H1 (cell line): ENCODE measurements at regions of chr19 and their contacts with region 1.

Region 1: DNA sequence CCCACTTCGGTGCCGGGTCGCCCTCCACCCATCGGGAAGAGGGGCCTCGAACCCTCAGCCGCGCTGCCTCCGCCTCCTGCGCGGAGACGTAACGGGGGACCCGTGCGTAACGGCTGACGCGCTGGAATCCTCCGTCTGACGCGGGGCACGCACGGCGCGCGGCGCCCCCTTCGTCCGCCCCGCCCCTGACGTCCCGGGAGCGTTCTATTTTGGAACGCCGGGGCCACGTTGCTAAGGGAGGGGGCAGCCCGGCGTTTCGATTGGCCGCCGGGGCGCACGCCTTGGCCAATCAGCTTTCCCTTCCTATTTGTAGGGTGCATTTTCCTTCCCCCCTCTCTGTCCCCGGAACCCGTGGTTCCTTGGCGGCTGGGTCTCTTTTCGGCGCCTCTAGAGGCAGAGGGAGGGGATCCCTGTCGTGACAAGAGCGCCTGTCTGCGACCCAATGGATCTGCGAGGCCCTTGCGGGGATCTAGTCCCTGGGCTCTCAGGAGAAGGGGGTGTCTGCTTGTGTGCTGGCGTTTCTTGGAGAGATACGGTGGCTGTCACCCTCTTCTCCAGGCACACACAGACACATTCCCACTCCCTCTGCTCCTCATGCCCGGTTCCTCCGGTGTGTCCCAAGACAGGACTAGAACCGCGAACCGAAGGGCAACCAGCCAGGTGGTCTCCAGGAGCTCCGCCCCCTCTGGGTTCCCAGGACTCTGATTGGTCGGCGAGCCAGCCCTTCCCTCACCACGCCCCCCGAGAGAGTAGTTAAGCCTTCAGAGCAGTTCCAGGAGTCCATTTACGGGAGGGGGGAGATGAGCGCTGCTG is 1.5 kb downstream of the FOSB start:
- DNase-seq: peak in 1 of 2 experiments; percentile 95
- H3K4me3 ChIP-seq: peak overlapping the region; percentile 48 to 95 (median 78)
- H3K27ac ChIP-seq: peak overlapping the region; percentile 87
- H3K4me1 ChIP-seq: peaks cover 0 to 22% (median 14%) of the 10 kb centered on the region in 4 experiments; a peak in 6 of 7 replicates
- H3K27me3 ChIP-seq: peaks cover 0 to 19% (median 17%) of the 10 kb centered on the region in 4 experiments; a peak in 4 of 7 replicates
- CTCF ChIP-seq: no peak
- EP300 ChIP-seq: peak in 1 of 2 experiments; percentile 73; a peak in 1 of 3 replicates
- POLR2A ChIP-seq: peak; percentile 71 to 87
- RAD21 ChIP-seq: no peak

Region 2: GRCh38 chr19:45450012-45450333 is 19.4 kb before region 1 on chr19:
- CTCF ChIA-PET with region 1: interaction called, 145 read pairs
- POLR2A ChIA-PET with region 1: interaction called, 41 read pairs
- DNase-seq: no peak
- H3K4me3 ChIP-seq: peak overlapping the region; percentile 47 to 69 (median 52); a peak in 7 of 8 replicates
- H3K27ac ChIP-seq: no peak overlapping the region
- H3K4me1 ChIP-seq: peaks cover 0 to 7% (median 4%) of the 10 kb centered on the region in 4 experiments; a peak in 4 of 7 replicates
- H3K27me3 ChIP-seq: peaks cover 0 to 19% (median 14%) of the 10 kb centered on the region in 4 experiments; a peak in 6 of 7 replicates
- CTCF ChIP-seq: no peak
- EP300 ChIP-seq: no peak
- POLR2A ChIP-seq: no peak
- RAD21 ChIP-seq: no peak

Region 3: GRCh38 chr19:45455707-45456499 is 13.4 kb before region 1 on chr19:
- CTCF ChIA-PET with region 1: interaction called, 17 read pairs
- POLR2A ChIA-PET with region 1: interaction called, 41 read pairs
- DNase-seq: peak in 1 of 2 experiments; percentile 85
- H3K4me3 ChIP-seq: 0 out of 8 replicates have a peak overlapping the region, but pooled peaks of 1 of the 4 experiments have one; percentile 7
- H3K27ac ChIP-seq: peak overlapping the region; percentile 48; the same call in 1 of the 2 replicates
- H3K4me1 ChIP-seq: peaks cover 0 to 15% (median 8%) of the 10 kb centered on the region in 4 experiments; a peak in 5 of 7 replicates
- H3K27me3 ChIP-seq: peaks cover 0 to 13% (median 12%) of the 10 kb centered on the region in 4 experiments; a peak in 6 of 7 replicates
- CTCF ChIP-seq: no peak
- EP300 ChIP-seq: peak in 1 of 2 experiments; percentile 50; a peak in 1 of 3 replicates
- POLR2A ChIP-seq: peak in 1 of 2 experiments; percentile 68; a peak in 2 of 3 replicates
- RAD21 ChIP-seq: peak in 1 of 2 experiments; percentile 13; a peak in 1 of 4 replicates

Region 4: DNA sequence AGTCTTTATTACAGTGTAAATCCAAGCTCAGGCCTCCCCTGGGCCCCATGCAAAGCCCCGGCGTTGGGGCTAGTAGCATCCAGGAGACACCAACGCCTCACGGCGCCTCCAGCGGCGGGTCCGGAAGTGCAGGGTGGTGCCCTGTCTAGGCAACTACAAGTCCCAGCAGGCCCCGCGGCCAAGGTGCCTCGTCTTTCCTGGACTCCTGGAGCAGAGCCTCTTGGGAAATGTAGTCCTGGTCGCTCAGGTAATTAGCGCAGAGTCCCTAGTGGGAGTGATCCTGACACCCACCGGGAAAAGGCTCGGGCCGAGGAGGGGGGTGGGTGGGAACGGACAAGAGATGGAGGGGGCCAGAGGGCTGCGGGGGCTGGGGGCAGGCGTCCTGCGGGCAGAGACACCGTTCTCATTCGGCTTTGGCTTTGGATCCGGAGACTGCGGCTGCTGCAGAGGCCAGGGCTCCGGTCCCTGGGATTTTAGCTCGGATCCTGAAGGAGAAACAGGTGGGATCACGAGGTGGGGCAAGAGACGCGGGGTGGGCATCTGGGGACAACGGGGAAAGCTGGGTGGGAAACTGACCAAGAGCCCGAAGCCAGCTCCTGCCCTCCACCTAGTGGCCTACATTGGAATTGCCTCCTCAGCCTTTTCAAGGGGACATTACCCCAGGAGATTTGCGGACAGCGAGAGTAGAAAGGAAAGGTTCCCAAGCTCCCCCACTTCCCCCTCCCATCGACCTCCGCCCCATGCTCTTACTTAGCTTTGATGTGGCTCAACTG is 16.2 kb after region 1 on chr19:
- CTCF ChIA-PET with region 1: interaction called, 27 read pairs
- POLR2A ChIA-PET with region 1: interaction called, 52 read pairs
- DNase-seq: peak in 1 of 2 experiments; percentile 100
- H3K4me3 ChIP-seq: peak overlapping the region; percentile 32 to 69 (median 52)
- H3K27ac ChIP-seq: no peak overlapping the region; the same call in 1 of the 2 replicates
- H3K4me1 ChIP-seq: peaks cover 0 to 3% (median 0%) of the 10 kb centered on the region in 4 experiments; a peak in 1 of 7 replicates
- H3K27me3 ChIP-seq: no peaks in the 10 kb centered on the region
- CTCF ChIP-seq: peak; percentile 86 to 95 (median 92)
- EP300 ChIP-seq: no peak
- POLR2A ChIP-seq: no peak
- RAD21 ChIP-seq: peak; percentile 59 to 66

Region 5: DNA sequence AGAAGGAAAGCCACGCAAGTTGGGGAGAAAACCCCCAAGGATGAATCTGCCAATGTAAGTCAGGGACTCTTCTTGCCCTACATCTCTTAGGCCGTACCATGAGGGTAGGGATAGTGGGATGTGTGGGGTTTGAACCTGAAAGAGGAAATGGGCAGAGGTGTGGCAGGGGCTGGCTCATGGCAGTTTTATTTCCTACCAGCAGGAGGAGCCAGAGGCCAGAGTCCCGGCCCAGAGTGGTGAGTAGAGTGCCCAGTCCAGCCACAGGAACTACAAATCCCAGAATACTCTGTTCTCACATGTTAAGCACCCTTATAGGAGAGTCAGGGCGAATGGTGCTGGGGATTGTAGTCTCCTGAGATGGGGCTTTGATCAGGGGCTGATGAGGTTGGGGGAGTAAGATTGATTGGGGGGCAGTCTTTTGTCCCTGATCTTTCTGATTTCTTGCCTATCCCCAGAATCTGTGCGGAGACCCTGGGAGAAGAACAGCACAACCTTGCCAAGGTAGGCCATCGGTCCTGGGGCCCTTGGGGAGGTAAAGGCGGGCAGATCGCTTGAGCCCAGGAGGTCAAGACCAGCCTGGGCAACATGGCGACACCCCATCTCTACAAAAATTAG is 54.4 kb after region 1 on chr19:
- CTCF ChIA-PET with region 1: no interaction called
- POLR2A ChIA-PET with region 1: no interaction called
- DNase-seq: peak; percentile 64 to 88
- H3K4me3 ChIP-seq: no peak overlapping the region
- H3K27ac ChIP-seq: no peak overlapping the region
- H3K4me1 ChIP-seq: peaks cover 0 to 7% (median 5%) of the 10 kb centered on the region in 4 experiments; a peak in 5 of 7 replicates
- H3K27me3 ChIP-seq: no peaks in the 10 kb centered on the region
- CTCF ChIP-seq: peak; percentile 82 to 93 (median 83)
- EP300 ChIP-seq: no peak
- POLR2A ChIP-seq: no peak
- RAD21 ChIP-seq: peak; percentile 85 to 86

Region 6: DNA sequence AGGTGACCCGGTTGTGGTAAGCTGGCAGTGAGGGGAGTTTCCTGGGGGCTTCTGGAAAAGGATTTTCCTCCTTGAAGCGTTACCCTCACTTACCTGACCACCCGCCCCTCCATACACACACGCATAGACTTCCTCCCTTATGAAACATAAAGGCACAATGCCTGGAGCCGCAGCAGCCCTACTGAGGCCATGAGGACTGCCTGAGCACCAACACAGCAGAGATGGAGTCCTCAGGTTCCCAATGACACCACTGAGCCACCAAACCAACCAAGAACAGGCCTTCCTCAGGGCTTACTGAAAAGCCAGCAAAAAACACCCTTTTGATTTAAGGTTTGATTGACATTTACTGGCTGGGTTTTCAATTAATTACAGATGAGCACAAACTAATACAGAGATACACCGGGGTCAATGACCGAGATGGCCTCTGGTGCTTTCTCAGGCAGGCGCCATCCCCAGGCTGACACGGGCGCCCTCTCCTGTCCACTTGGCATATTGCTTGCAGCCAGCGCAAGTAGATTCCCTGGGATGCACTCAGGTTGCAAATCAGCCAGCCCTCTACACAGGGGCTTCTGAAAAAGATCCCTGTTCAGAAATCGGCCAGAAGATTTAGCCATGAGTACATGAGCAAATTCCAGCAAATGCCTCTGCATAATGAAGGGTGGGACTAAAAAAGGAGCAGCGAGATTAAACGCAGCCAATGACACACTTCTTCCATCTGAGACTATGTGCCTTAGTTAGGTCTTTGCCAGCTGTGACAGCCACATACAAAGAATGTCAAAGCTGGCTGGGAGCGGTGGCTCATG is 100.5 kb after region 1 on chr19:
- CTCF ChIA-PET with region 1: no interaction called
- POLR2A ChIA-PET with region 1: no interaction called
- DNase-seq: peak; percentile 46 to 96
- H3K4me3 ChIP-seq: no peak overlapping the region
- H3K27ac ChIP-seq: no peak overlapping the region
- H3K4me1 ChIP-seq: no peaks in the 10 kb centered on the region; a peak in 1 of 7 replicates
- H3K27me3 ChIP-seq: no peaks in the 10 kb centered on the region
- CTCF ChIP-seq: peak; percentile 93 to 98 (median 95)
- EP300 ChIP-seq: no peak
- POLR2A ChIP-seq: no peak
- RAD21 ChIP-seq: peak; percentile 79 to 87